CD14-positive monocyte (primary cell): ENCODE measurements at regions of chr13 and their contacts with region 1.

Region 1: DNA sequence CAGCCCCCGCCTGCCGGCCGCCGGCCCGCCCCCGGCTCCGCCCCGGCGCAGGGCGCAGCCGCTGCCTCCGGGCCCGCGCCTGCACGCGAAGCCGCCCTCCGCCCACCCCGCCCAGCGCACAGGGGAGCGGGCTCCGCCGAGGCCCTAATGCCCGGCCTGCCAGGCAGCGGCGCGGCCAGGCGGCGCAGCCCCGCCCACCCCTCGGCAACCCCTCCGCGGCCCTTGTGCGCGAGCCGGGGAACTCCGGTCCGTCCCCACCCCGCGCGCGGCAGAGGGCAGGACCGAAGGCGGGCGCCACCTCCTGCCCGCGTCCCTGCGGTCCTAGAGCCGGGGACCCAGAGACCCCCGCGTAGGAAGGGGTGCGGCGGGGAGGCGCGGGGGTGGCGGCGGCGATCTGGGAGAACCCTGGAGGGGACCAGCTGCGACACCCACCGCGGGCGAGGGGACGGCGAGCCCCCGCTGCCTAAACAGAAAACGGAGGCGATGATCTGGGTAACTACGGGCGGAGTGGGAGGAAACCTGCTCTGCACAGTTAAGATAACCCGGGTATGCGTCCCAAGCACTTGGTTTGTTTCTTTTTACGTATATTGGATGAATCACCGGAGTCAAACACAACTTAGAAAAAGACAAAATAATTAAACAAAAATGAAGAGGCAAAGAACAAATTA is 350 bp upstream of the USP12 start:
- DNase-seq: peak; percentile 80 to 87 (median 85)
- H3K4me3 ChIP-seq: peak overlapping the region; percentile 51 to 97 (median 86)
- H3K4me3 Mint-ChIP-seq: peak overlapping the region; percentile 82 to 91
- H3K27ac ChIP-seq: peak overlapping the region; percentile 93 to 99
- H3K27ac Mint-ChIP-seq: peak overlapping the region; percentile 93 to 98 (median 97)
- H3K4me1 ChIP-seq: peaks cover 47 to 65% of the 10 kb centered on the region in 2 donors
- H3K4me1 Mint-ChIP-seq: peaks cover 50% of the 10 kb centered on the region
- H3K27me3 ChIP-seq: no peaks in the 10 kb centered on the region
- H3K27me3 Mint-ChIP-seq: no peaks in the 10 kb centered on the region
- CTCF ChIP-seq: no peak

Region 2: DNA sequence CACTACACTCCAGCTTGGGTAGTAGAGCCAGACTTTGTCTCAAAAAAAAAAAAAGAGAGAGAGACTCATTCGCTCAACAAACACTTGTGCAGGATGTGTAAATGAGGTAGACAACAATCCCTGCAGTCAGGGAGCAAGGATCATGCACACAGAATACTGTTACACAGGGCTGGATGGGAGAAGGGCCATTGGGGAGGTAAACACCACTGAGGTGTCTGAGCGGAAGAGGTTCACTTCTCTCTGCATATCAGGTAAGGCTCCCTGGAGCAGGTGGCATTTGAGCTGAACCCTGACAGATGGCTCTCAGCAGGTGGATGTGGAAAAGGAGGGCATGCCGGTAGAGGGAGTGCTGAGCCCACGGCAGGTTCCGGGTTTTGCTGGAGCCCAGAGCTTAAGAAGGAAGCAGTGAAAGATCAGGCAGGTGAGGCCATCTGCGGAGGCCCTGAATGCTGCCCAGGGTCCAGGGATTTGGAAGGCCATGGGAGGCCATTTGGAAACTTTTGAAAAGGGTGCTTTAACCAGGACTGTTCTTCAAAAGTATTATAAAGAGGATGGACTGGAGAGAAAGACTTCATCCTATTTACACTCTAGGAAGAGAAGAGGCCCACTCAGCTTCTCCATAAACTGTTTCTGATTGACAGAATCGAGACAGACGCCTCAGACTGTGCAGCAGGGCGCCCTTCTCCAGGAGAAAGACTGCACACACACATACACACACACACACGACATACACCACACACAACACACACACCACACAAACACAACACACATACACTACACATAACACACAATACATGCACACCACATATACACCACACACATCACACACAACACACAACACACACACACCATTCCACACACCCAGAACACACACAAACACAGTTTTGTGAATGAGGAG is 199.7 kb before region 1 on chr13:
- intact Hi-C with region 1: loop called in 1 of 2 experiments (anchors 10 kb)
- DNase-seq: peak; percentile 15 to 30 (median 23)
- H3K4me3 ChIP-seq: no peak overlapping the region
- H3K4me3 Mint-ChIP-seq: no peak overlapping the region
- H3K27ac ChIP-seq: no peak overlapping the region
- H3K27ac Mint-ChIP-seq: peak overlapping the region in 4 of 7 donors; percentile 5 to 77 (median 42)
- H3K4me1 ChIP-seq: peaks cover 4 to 7% of the 10 kb centered on the region in 2 donors
- H3K4me1 Mint-ChIP-seq: peaks cover 8% of the 10 kb centered on the region
- H3K27me3 ChIP-seq: no peaks in the 10 kb centered on the region
- H3K27me3 Mint-ChIP-seq: peaks cover 0 to 6% (median 1%) of the 10 kb centered on the region in 3 donors
- CTCF ChIP-seq: peak; percentile 46

Region 3: DNA sequence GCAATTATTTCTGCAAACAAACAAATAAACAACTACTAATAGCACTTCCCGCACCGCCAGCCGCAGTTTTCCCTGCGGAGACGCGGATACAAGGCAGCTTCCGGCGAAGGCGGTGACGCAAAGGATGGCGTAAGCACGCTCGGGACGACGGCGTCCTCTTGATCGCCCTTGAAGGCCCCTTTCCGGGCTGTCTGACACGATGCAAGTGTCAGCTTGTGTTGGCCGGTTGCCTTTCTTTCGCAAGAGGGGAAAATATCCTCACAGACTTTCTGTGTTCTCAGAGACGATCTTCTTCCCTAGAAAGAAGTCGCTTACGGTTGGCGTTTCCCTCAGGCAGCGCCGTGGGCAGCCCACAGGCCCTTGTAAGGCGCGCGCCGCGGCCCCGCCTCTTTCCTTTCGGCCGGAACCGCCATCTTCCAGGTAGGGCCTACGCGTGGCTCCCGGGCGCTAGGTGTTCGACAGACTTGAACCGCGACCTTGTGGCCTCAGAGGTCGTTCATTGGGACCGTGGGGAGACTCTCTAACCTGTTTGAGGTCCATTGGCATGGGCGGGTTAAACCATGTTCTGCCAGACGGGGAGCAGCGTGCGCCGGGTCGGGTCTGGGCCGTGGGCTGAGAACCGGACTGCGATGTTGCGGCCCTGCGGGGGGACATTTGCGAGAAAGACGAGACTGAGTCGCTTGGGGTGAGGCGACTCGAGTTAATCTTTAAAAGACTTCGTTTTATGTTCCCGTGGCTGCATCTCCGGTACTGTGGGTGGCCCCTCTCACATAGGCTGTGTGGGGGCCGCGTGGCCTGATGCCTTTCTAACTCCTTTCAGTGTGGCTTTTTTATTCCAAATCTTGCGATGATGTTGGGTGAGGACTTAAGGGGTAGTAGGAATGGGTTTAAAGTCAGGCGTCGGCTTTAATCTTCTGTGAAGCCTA is 79.5 kb after region 1 on chr13 and contains the start of gene RPL21:
- intact Hi-C with region 1: loop called (anchors 2 to 5 kb)
- DNase-seq: peak; percentile 93 to 97 (median 96)
- H3K4me3 ChIP-seq: peak within 1 kb of the TSS; percentile 64 to 94 (median 72)
- H3K4me3 Mint-ChIP-seq: peak within 1 kb of the TSS; percentile 96 to 97
- H3K27ac ChIP-seq: peak within 1 kb of the TSS; percentile 87 to 94
- H3K27ac Mint-ChIP-seq: peak within 1 kb of the TSS; percentile 98 to 99 (median 99)
- H3K4me1 ChIP-seq: peaks cover 11 to 25% of the 10 kb centered on the region in 2 donors
- H3K4me1 Mint-ChIP-seq: peaks cover 25% of the 10 kb centered on the region
- H3K27me3 ChIP-seq: no peaks in the 10 kb centered on the region
- H3K27me3 Mint-ChIP-seq: no peaks in the 10 kb centered on the region
- CTCF ChIP-seq: no peak
- polyA plus RNA-seq, gene RPL21: 1,311 to 1,781 (median 1,417) TPM

Region 4: DNA sequence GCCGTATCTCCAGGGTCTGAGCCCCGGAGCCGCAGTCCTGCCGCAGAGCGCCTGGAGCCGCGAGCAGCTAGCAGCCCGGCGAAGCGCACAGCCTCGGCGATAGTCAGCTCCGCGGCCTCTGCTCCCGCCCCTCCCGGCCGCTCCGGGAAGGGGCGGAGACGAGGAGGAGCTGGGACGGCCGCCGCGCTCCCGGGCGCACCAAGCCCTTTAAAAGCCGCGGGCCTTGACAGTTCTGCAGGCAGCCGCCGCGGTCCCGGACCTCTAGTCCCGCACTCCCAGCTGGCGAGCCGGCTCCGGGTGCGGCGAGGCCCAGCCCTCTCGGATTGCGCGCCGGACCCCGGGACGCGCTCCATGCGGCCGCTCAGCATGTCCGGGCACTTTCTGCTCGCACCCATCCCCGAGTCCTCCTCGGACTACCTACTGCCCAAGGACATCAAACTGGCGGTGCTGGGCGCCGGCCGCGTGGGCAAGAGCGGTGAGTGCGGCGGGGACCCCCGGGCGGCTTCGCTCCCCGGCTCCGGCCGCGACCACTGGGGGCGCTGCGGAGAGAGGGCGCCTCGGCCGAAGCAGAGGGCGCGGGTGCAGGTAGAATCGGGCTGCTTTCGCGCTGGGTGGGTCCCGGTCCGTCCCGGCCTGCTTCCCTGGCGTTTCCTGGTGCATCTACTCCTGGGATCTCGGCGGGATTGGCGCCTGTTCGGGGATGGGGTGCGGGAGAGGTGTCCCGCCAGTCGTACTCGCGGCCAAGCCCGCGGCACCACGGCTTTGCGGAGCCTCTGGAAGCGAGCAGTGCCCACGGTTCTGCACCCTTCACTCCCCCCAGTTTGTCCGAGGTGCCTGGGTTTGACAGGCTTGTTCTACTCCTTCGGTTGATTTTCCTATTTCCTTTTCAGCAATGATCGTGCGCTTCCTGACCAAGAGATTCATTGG is 98.9 kb after region 1 on chr13 and contains the start of gene RASL11A:
- intact Hi-C with region 1: loop called in 1 of 2 experiments (anchors 5 kb)
- DNase-seq: peak; percentile 59 to 61 (median 60)
- H3K4me3 ChIP-seq: peak within 1 kb of the TSS; percentile 58 to 90 (median 78)
- H3K4me3 Mint-ChIP-seq: peak within 1 kb of the TSS; percentile 90 to 95
- H3K27ac ChIP-seq: peak within 1 kb of the TSS; percentile 25 to 70
- H3K27ac Mint-ChIP-seq: peak within 1 kb of the TSS; percentile 28 to 93 (median 66)
- H3K4me1 ChIP-seq: peaks cover 36 to 42% of the 10 kb centered on the region in 2 donors
- H3K4me1 Mint-ChIP-seq: peaks cover 39% of the 10 kb centered on the region
- H3K27me3 ChIP-seq: peaks cover 2 to 25% of the 10 kb centered on the region in 2 donors
- H3K27me3 Mint-ChIP-seq: peaks cover 16 to 36% (median 27%) of the 10 kb centered on the region in 3 donors
- CTCF ChIP-seq: peak; percentile 100
- polyA plus RNA-seq, gene RASL11A: 1.0 to 6.8 (median 3.8) TPM

Region 5: GRCh38 chr13:27293873-27294515 is 122.0 kb after region 1 on chr13:
- intact Hi-C with region 1: no loop called
- DNase-seq: no peak
- H3K4me3 ChIP-seq: no peak overlapping the region
- H3K4me3 Mint-ChIP-seq: no peak overlapping the region
- H3K27ac ChIP-seq: no peak overlapping the region
- H3K27ac Mint-ChIP-seq: no peak overlapping the region
- H3K4me1 ChIP-seq: no peaks in the 10 kb centered on the region
- H3K4me1 Mint-ChIP-seq: no peaks in the 10 kb centered on the region
- H3K27me3 ChIP-seq: no peaks in the 10 kb centered on the region
- H3K27me3 Mint-ChIP-seq: peaks cover 0 to 8% (median 4%) of the 10 kb centered on the region in 3 donors
- CTCF ChIP-seq: no peak